Adrenal gland (tissue), 19 donors: ENCODE measurements at regions of chr4 and their contacts with region 1.

Region 1: GRCh38 chr4:185425647-185426352 is at the start of gene UFSP2:
- DNase-seq: peak; percentile 85 to 95 (median 91)
- H3K4me3 ChIP-seq: peak within 1 kb of the TSS; percentile 72 to 77 (median 76)
- H3K27ac ChIP-seq: peak within 1 kb of the TSS; percentile 64 to 97 (median 93)
- H3K4me1 ChIP-seq: peaks cover 8 to 36% of the 10 kb centered on the region in 2 donors
- H3K27me3 ChIP-seq: no peaks in the 10 kb centered on the region
- CTCF ChIP-seq: peak in 1 of 6 experiments; percentile 1
- POLR2A ChIP-seq: peak; percentile 31 to 70
- total RNA-seq, gene UFSP2: 19.7 to 56.4 (median 45.3) TPM

Region 2: GRCh38 chr4:185597532-185598188 is 171.9 kb after region 1 on chr4:
- intact Hi-C with region 1: loop called in 1 of 2 experiments (anchors 10 kb)
- DNase-seq: peak; percentile 74 to 94 (median 79)
- H3K4me3 ChIP-seq: no peak overlapping the region
- H3K27ac ChIP-seq: peak overlapping the region in 2 of 5 donors; percentile 30 to 58
- H3K4me1 ChIP-seq: peaks cover 0 to 33% of the 10 kb centered on the region in 2 donors
- H3K27me3 ChIP-seq: no peaks in the 10 kb centered on the region
- CTCF ChIP-seq: peak; percentile 96 to 99 (median 98)
- POLR2A ChIP-seq: no peak

Region 3: GRCh38 chr4:186318481-186318880 is 892.7 kb after region 1 on chr4:
- intact Hi-C with region 1: no loop called
- DNase-seq: no peak
- H3K4me3 ChIP-seq: no peak overlapping the region
- H3K27ac ChIP-seq: no peak overlapping the region
- H3K4me1 ChIP-seq: no peaks in the 10 kb centered on the region
- H3K27me3 ChIP-seq: peaks cover 8% of the 10 kb centered on the region
- CTCF ChIP-seq: no peak
- POLR2A ChIP-seq: no peak